Caco-2 (cell line): ENCODE measurements at regions of chr4 and their contacts with region 1.

Region 1: DNA sequence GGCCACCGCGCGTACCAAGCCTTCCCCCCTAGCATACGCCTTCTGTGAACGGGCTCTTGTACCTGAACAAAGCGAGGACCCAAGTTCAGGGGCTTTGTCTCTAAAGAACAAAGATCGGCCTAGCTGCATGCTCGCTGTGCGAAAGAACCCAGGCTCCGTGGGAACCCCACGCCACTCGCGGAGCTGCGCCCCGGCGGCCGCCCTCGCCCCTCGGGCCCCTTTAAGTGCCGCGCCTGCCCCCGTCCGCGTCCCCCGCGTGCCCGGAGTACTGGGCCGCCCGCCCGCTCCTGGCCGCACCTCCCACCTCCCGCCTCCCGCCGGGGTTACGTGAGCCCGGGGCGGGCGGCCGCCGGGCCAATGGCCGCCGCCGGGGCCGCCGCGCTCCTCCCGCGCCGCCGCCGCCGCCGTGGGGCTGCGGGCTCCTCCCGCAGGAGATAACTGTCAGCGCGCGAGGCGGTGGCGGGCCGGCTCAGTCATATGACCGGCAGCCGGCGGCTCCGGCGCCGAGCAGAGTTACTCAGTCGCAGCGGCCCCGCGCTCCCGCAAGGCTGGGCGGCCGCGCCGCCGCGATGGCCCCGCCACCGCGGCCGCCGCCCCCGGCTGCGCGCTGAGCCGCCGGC is at the start of gene FNIP2:
- DNase-seq: peak; percentile 68 to 85
- H3K4me3 ChIP-seq: peak within 1 kb of the TSS; percentile 90
- H3K4me3 Mint-ChIP-seq: peak within 1 kb of the TSS; percentile 95
- H3K27ac Mint-ChIP-seq: peak within 1 kb of the TSS; percentile 73
- H3K4me1 ChIP-seq: peaks cover 9% of the 10 kb centered on the region
- H3K4me1 Mint-ChIP-seq: peaks cover 6% of the 10 kb centered on the region
- H3K27me3 ChIP-seq: no peaks in the 10 kb centered on the region
- H3K27me3 Mint-ChIP-seq: no peaks in the 10 kb centered on the region
- CTCF ChIP-seq: no peak
- total RNA-seq, gene FNIP2: 12.4 and 15.8 TPM in 2 replicates

Region 2: GRCh38 chr4:158500054-158500453 is 268.6 kb before region 1 on chr4:
- CTCF ChIA-PET with region 1: no interaction called
- POLR2A ChIA-PET with region 1: no interaction called
- intact Hi-C with region 1: no loop called
- DNase-seq: no peak
- H3K4me3 ChIP-seq: no peak overlapping the region
- H3K4me3 Mint-ChIP-seq: no peak overlapping the region
- H3K27ac Mint-ChIP-seq: no peak overlapping the region
- H3K4me1 ChIP-seq: no peaks in the 10 kb centered on the region
- H3K4me1 Mint-ChIP-seq: no peaks in the 10 kb centered on the region
- H3K27me3 ChIP-seq: no peaks in the 10 kb centered on the region
- H3K27me3 Mint-ChIP-seq: peaks cover 3% of the 10 kb centered on the region
- CTCF ChIP-seq: no peak

Region 3: GRCh38 chr4:158656439-158656838 is 112.2 kb before region 1 on chr4:
- CTCF ChIA-PET with region 1: no interaction called
- POLR2A ChIA-PET with region 1: no interaction called
- intact Hi-C with region 1: no loop called
- DNase-seq: no peak
- H3K4me3 ChIP-seq: no peak overlapping the region
- H3K4me3 Mint-ChIP-seq: no peak overlapping the region
- H3K27ac Mint-ChIP-seq: no peak overlapping the region
- H3K4me1 ChIP-seq: no peaks in the 10 kb centered on the region
- H3K4me1 Mint-ChIP-seq: no peaks in the 10 kb centered on the region
- H3K27me3 ChIP-seq: no peaks in the 10 kb centered on the region
- H3K27me3 Mint-ChIP-seq: peaks cover 3% of the 10 kb centered on the region
- CTCF ChIP-seq: no peak

Region 4: GRCh38 chr4:158704269-158704668 is 64.4 kb before region 1 on chr4:
- CTCF ChIA-PET with region 1: no interaction called
- POLR2A ChIA-PET with region 1: no interaction called
- intact Hi-C with region 1: no loop called
- DNase-seq: no peak
- H3K4me3 ChIP-seq: no peak overlapping the region
- H3K4me3 Mint-ChIP-seq: no peak overlapping the region
- H3K27ac Mint-ChIP-seq: no peak overlapping the region
- H3K4me1 ChIP-seq: no peaks in the 10 kb centered on the region
- H3K4me1 Mint-ChIP-seq: no peaks in the 10 kb centered on the region
- H3K27me3 ChIP-seq: no peaks in the 10 kb centered on the region
- H3K27me3 Mint-ChIP-seq: no peaks in the 10 kb centered on the region
- CTCF ChIP-seq: no peak

Region 5: DNA sequence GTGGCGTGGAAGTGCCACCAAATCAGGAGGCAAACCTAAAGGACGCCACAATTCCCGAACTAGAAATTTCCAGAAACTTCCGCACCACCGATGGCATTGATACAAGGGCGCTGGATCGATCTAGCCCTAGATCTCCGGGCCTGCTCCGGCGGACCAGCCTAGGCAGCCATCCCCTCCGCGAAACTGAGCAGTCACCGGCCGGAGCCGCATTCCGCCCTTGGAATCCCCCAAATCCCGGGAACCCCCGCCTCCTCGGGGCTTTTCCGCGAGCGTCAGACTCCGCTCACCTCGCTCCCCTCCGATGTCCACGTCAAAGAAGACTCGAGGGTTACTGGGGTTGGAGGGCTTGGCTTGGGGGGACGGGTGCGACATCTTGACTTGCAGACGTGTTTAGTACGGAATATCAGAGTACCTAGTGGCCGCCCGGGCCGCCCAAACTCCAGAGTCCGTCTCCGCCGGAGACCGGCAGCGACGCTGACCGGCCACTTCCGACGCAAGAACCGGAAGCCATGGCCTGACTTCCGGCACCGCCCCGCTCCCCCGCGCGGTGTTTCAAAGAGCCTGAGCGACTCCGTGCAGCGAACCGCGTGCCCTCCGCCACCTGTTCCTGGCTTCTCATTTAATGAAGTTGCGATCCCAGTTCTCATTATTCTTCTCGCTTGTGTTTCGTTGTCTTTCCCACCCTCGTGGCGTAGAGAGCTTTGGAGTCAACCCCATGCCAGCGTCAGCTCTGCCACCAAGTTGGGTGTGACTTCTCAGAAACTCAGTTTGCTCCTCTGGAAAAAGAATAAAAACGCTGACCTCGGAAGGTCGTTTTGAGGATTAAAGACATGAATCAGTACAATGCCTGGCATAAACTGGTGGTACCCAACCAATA is 45.5 kb before region 1 on chr4 and contains the start of gene PPID:
- CTCF ChIA-PET with region 1: no interaction called
- POLR2A ChIA-PET with region 1: no interaction called
- intact Hi-C with region 1: loop called (anchors 2 kb)
- DNase-seq: peak; percentile 85 to 88
- H3K4me3 ChIP-seq: peak within 1 kb of the TSS; percentile 68
- H3K4me3 Mint-ChIP-seq: peak within 1 kb of the TSS; percentile 90
- H3K27ac Mint-ChIP-seq: peak within 1 kb of the TSS; percentile 95
- H3K4me1 ChIP-seq: peaks cover 6% of the 10 kb centered on the region
- H3K4me1 Mint-ChIP-seq: peaks cover 9% of the 10 kb centered on the region
- H3K27me3 ChIP-seq: no peaks in the 10 kb centered on the region
- H3K27me3 Mint-ChIP-seq: no peaks in the 10 kb centered on the region
- CTCF ChIP-seq: no peak
- total RNA-seq, gene PPID: 50.9 and 57.2 TPM in 2 replicates

Region 6: DNA sequence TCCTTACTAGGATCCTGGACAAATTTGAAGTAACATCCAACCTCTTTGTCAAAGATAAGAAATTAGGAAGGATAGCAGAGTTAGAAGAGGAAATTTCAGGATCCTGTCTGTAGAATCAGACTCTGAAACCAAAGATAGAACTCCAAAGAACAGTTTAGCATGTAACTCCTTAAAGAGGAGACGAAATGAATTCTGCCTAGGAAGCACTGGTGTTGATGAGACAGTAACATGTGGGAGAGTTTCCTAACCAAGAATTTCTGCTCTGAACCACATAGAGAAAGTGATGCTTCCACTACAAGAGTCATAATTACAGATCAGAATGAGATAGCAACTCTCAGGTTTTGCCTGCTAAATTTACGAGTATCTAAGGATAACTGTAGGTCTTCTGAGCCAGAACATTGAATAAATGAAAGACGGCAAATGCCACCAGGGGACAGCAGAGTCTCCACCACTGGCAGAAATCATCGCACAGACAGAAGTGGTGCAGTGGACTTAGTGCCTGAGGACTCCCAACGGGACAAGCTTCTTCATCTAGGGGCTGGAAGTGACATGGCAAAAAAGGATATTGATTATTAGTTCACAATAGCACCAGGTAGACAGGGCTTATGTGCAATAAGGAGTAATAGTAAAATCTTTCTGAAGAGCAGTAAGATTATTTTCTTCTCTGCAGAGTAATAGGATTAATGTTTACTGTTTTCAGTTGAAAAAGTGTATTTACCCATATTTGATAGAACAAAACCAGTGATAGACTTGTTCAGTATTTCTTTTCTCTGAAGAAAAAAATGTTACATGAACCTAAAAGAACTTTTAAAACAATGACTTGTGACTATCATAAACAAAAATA is 38.7 kb before region 1 on chr4:
- CTCF ChIA-PET with region 1: no interaction called
- POLR2A ChIA-PET with region 1: no interaction called
- intact Hi-C with region 1: loop called (anchors 1 kb)
- DNase-seq: peak; percentile 63 to 66
- H3K4me3 ChIP-seq: no peak overlapping the region
- H3K4me3 Mint-ChIP-seq: no peak overlapping the region
- H3K27ac Mint-ChIP-seq: no peak overlapping the region
- H3K4me1 ChIP-seq: no peaks in the 10 kb centered on the region
- H3K4me1 Mint-ChIP-seq: peaks cover 6% of the 10 kb centered on the region
- H3K27me3 ChIP-seq: no peaks in the 10 kb centered on the region
- H3K27me3 Mint-ChIP-seq: peaks cover 6% of the 10 kb centered on the region
- CTCF ChIP-seq: peak; percentile 65 to 78

Region 7: DNA sequence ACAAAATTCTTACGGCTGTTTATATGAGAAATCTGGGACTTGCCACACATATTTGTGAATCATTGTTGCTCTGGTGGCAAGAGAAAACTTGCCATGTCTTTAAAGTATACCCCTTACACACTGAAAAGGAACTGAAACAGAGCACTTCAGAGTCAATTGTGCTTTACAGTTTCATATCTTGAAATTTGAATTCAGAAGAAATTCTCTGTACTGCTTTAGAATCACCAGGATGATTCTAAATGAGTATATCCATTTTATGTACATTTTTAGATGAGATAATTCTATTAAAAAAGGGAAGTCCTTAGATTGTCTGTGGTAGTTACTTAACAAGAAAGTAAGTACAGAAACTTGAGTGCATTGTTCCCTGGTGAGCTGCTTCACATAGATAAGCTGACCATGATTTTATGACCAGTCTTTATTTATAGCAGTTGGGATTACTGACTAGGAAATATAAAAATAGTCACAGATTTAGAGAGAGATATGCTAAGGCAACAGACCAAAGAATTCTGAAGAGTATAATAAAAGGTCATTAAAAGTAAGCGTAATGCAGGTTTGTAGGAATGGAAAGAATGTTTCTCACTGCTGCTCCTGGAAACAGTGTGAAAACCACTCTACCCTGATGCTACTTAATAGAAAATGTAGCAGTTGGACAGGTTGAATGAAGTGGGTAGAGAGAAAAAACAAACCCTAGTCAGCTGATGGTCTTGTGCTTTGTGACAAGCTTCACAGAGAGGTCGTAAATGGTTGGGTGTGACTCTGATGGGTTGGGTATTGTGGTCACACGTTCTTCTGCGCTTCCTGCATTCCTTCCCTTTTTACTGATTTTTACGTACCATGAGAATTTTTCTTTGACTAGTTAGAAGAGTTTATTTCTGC is 41.2 kb after region 1 on chr4:
- CTCF ChIA-PET with region 1: no interaction called
- POLR2A ChIA-PET with region 1: no interaction called
- intact Hi-C with region 1: loop called (anchors 5 kb)
- DNase-seq: peak; percentile 49 to 52
- H3K4me3 ChIP-seq: no peak overlapping the region
- H3K4me3 Mint-ChIP-seq: peak overlapping the region; percentile 30
- H3K27ac Mint-ChIP-seq: peak overlapping the region; percentile 55
- H3K4me1 ChIP-seq: peaks cover 36% of the 10 kb centered on the region
- H3K4me1 Mint-ChIP-seq: peaks cover 48% of the 10 kb centered on the region
- H3K27me3 ChIP-seq: no peaks in the 10 kb centered on the region
- H3K27me3 Mint-ChIP-seq: peaks cover 2% of the 10 kb centered on the region
- CTCF ChIP-seq: no peak

Region 8: GRCh38 chr4:158826057-158826456 is 57.4 kb after region 1 on chr4:
- CTCF ChIA-PET with region 1: no interaction called
- POLR2A ChIA-PET with region 1: no interaction called
- intact Hi-C with region 1: loop called (anchors 2 kb)
- DNase-seq: no peak
- H3K4me3 ChIP-seq: no peak overlapping the region
- H3K4me3 Mint-ChIP-seq: peak overlapping the region; percentile 37
- H3K27ac Mint-ChIP-seq: peak overlapping the region; percentile 80
- H3K4me1 ChIP-seq: peaks cover 45% of the 10 kb centered on the region
- H3K4me1 Mint-ChIP-seq: peaks cover 54% of the 10 kb centered on the region
- H3K27me3 ChIP-seq: no peaks in the 10 kb centered on the region
- H3K27me3 Mint-ChIP-seq: no peaks in the 10 kb centered on the region
- CTCF ChIP-seq: no peak

Region 9: DNA sequence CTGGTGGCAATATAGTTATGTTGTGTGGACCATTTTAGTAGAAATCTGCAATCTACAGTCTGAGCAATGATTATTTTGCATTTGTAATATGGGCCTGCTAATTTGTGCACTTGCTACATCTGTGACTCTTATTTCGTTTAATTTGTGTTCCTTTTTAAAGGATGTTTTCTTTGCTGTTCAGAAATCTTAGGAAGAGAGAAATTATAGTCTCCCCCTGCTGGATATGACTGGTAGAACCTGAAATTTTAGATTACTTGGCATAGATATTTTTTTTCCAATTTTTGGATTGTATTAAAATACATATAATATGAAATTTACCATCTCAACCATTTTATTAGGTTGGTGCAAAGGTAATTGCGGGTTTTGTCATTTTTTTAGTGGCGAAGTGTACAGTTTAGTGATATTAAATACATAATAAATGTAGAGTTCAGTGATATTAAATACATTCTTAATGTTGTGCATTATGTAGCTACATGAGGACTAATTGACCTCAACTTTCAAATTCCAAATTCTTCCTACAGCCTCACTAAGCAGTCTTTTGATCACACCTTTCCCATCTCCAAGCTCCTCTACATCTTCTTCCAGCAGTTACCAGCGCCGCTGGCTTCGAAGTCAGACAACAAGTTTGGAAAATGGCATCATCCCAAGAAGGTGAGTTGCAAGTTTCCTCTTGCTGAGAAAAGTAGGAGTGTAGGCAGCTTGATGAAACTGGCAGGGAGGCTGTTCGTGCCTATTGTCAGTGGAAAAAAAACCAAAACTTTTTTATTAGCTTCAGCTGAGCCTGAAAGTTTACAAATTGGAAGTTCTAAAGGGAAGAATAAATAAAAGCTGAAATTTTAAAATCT is 82.4 kb after region 1 on chr4:
- CTCF ChIA-PET with region 1: no interaction called
- POLR2A ChIA-PET with region 1: no interaction called
- intact Hi-C with region 1: loop called (anchors 1 kb)
- DNase-seq: peak in 1 of 2 experiments; percentile 30
- H3K4me3 ChIP-seq: no peak overlapping the region
- H3K4me3 Mint-ChIP-seq: no peak overlapping the region
- H3K27ac Mint-ChIP-seq: no peak overlapping the region
- H3K4me1 ChIP-seq: no peaks in the 10 kb centered on the region
- H3K4me1 Mint-ChIP-seq: no peaks in the 10 kb centered on the region
- H3K27me3 ChIP-seq: no peaks in the 10 kb centered on the region
- H3K27me3 Mint-ChIP-seq: no peaks in the 10 kb centered on the region
- CTCF ChIP-seq: peak; percentile 52 to 55